Left cardiac atrium (tissue), 4 donors: ENCODE measurements at regions of chr7 and their contacts with region 1.

Region 1: DNA sequence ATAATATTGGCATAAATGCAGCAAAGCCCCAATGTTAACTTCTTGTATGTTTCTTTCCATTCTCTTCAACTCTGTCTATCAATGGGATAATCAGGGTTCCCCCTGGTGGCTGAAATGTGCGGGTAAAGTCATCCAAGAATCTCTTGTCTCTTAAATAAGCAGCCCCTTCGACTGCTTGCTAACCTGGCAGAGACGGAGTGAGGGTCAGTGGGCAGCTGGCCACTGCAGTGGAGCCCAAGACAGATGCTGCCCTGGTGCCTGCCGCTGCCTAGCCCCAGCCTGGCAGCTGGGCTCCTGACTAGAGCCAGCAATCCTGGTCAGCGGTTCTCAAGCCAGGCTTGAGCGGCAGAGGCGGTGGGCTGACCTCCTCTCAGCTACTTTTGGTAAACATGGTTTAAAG is 248.9 kb downstream of the COBL start:
- DNase-seq: peak; percentile 68
- ATAC-seq: peak; percentile 52 to 62

Region 2: DNA sequence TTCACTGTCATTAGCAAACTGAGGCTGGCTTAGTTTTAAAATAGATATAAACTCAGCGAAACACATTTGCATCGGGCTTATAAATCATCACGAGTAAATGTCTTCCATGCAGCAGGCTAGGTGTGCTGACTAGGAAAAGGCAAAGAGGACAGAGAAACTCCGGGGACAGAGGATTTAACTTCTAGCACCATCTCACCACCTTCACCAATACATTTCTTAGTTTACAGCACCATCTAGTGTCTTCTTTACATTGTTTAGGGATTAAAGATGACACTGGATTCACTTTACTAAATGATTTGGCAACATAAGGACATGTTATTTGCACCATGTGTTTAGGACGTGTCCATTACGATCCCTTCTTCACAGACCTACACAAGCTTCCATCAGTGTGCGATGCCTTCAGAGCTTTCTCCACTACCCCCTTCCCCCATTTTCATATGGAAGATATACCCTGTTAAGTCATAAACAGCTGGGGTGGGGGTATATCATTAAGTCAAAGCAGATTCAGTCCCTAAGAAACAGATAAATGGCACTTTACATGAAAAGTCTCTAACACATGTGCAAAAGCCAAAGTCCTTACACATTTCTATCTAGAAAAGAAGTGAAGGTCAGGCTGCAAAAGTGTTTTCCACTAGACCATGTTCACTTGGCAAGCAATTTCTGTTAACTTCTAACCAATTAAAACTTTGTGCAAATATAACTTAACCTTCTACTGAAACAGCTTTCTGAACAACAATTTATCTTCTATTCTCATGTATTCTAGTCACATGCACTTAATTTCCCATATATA is 388.3 kb before region 1 on chr7:
- intact Hi-C with region 1: loop called in 1 of 2 experiments (anchors 10 kb)
- DNase-seq: no peak
- ATAC-seq: peak; percentile 60 to 82

Region 3: GRCh38 chr7:50793115-50793946 is 274.4 kb before region 1 on chr7:
- intact Hi-C with region 1: loop called (anchors 5 to 10 kb)
- DNase-seq: peak; percentile 84
- ATAC-seq: peak; percentile 89 to 90

Region 4: GRCh38 chr7:51123322-51124029 is 55.7 kb after region 1 on chr7:
- intact Hi-C with region 1: loop called in 1 of 2 experiments (anchors 10 kb)
- DNase-seq: peak; percentile 47
- ATAC-seq: peak; percentile 82 to 89

Region 5: GRCh38 chr7:51141451-51142003 is 73.8 kb after region 1 on chr7:
- intact Hi-C with region 1: loop called in 1 of 2 experiments (anchors 5 kb)
- DNase-seq: no peak
- ATAC-seq: peak; percentile 50 to 78